Heart right ventricle (tissue), 16 donors: ENCODE measurements at regions of chr14 and their contacts with region 1.

Region 1: DNA sequence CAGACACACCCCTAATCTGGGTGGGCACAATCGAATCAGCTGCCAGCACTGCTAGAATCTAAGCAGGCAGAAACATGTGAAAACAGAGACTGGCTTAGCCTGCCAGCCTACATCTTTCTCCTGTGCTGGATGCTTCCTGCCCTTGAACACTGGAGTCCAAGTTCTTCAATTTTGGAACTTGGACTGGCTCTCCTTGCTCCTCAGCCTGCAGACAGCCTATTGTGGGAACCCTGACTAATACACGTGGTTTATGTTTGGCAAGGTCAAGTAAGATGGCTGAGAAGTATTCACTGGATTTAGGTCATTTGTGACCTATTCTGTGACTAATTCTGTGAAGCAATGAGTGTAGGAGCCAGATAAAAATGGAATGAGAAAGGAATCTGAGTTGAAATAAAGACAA is 11.0 kb downstream of the GPR135 start:
- DNase-seq: no peak
- ATAC-seq: peak in 7 of 8 donors; percentile 56 to 96 (median 88)
- H3K4me3 ChIP-seq: no peak overlapping the region
- H3K27ac ChIP-seq: peak overlapping the region in 6 of 10 donors; percentile 11 to 68 (median 36)
- H3K4me1 ChIP-seq: peaks cover 0 to 5% (median 0%) of the 10 kb centered on the region in 9 donors
- H3K27me3 ChIP-seq: no peaks in the 10 kb centered on the region
- CTCF ChIP-seq: no peak

Region 2: GRCh38 chr14:58491593-58491992 is 962.5 kb before region 1 on chr14:
- intact Hi-C with region 1: loop called in 1 of 10 experiments (anchors 10 kb)
- DNase-seq: no peak
- ATAC-seq: no peak
- H3K4me3 ChIP-seq: no peak overlapping the region
- H3K27ac ChIP-seq: no peak overlapping the region
- H3K4me1 ChIP-seq: no peaks in the 10 kb centered on the region
- H3K27me3 ChIP-seq: no peaks in the 10 kb centered on the region
- CTCF ChIP-seq: no peak

Region 3: GRCh38 chr14:59028476-59029202 is 425.5 kb before region 1 on chr14:
- intact Hi-C with region 1: loop called in 1 of 10 experiments (anchors 10 kb)
- DNase-seq: peak; percentile 25 to 41
- ATAC-seq: peak in 7 of 8 donors; percentile 58 to 81 (median 74)
- H3K4me3 ChIP-seq: no peak overlapping the region
- H3K27ac ChIP-seq: no peak overlapping the region
- H3K4me1 ChIP-seq: peaks cover 0 to 9% (median 0%) of the 10 kb centered on the region in 9 donors
- H3K27me3 ChIP-seq: no peaks in the 10 kb centered on the region
- CTCF ChIP-seq: peak; percentile 41 to 83 (median 77)

Region 4: DNA sequence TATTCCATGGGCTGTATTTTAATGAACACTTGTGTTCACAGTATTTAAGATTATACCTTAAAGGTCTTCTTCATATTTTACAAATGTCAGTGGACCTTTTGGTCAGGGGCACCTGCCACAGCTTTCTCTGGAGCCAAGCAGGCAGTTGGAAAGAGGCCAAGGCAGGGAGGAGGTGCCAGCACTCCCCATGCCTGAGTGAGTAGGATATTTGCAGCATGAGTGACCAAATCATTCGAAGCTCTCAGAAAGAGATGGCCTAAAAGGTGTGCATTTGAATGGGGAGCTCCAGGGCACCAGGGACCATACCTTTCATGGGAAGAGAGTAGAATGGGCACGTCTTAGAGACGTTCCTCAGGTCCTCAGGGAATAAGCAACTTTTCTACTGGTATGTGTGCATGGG is 110.5 kb before region 1 on chr14:
- intact Hi-C with region 1: no loop called
- DNase-seq: peak; percentile 49 to 62
- ATAC-seq: peak; percentile 21 to 80 (median 61)
- H3K4me3 ChIP-seq: no peak overlapping the region
- H3K27ac ChIP-seq: peak overlapping the region in 8 of 10 donors; percentile 63 to 78 (median 72)
- H3K4me1 ChIP-seq: peaks cover 10 to 65% (median 43%) of the 10 kb centered on the region in 9 donors
- H3K27me3 ChIP-seq: no peaks in the 10 kb centered on the region
- CTCF ChIP-seq: no peak